Ovary (tissue), 10 donors: ENCODE measurements at regions of chr18 and their contacts with region 1.

Region 1: DNA sequence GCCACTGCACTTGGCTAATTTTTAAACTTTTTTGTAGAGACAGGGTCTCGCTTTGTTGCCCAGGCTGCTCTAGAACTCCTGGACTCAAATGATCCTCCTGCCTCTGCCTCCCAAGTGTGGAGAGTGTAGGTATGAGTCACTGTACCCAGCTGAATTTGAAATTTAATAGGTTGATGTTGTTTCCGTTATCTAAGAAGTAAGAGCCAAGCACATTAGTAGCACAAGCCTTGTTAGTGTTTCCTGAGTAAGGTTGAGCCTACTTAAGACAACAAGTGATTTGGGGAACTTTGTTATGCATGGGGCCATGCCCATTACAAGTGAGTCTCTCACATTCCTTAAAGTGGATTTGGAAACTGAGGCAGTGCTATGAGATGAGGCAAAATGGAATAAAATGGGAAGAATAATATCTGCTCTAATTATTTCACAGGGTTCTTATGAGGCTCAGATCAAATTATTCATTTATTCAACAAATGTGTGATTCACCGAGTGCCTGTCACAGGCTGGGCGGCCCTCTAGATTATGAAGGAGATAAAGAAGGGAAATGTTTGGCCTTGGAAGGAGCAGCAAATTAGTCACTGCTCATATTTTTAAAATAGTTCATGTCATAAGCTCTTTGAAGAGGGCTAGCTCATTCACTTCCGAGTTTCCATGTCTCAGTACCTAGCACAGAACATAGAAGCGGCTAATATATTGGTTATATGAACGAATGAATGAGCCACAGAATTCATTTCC is 217.2 kb downstream of the LDLRAD4 start:
- DNase-seq: no peak
- H3K4me3 ChIP-seq: no peak overlapping the region
- H3K27ac ChIP-seq: no peak overlapping the region
- H3K4me1 ChIP-seq: no peaks in the 10 kb centered on the region
- H3K27me3 ChIP-seq: no peaks in the 10 kb centered on the region
- CTCF ChIP-seq: no peak
- EP300 ChIP-seq: no peak
- POLR2A ChIP-seq: no peak

Region 2: GRCh38 chr18:13308369-13308768 is 127.4 kb before region 1 on chr18:
- intact Hi-C with region 1: loop called in 1 of 4 experiments (anchors 5 kb)
- DNase-seq: no peak
- H3K4me3 ChIP-seq: no peak overlapping the region
- H3K27ac ChIP-seq: no peak overlapping the region
- H3K4me1 ChIP-seq: no peaks in the 10 kb centered on the region
- H3K27me3 ChIP-seq: no peaks in the 10 kb centered on the region
- CTCF ChIP-seq: no peak
- EP300 ChIP-seq: no peak
- POLR2A ChIP-seq: no peak

Region 3: GRCh38 chr18:13481820-13482617 is 46.3 kb after region 1 on chr18:
- intact Hi-C with region 1: loop called in 1 of 4 experiments (anchors 5 kb)
- DNase-seq: no peak
- H3K4me3 ChIP-seq: no peak overlapping the region
- H3K27ac ChIP-seq: no peak overlapping the region
- H3K4me1 ChIP-seq: no peaks in the 10 kb centered on the region
- H3K27me3 ChIP-seq: no peaks in the 10 kb centered on the region
- CTCF ChIP-seq: no peak
- EP300 ChIP-seq: no peak
- POLR2A ChIP-seq: no peak